ENCODE measurements at regions of chr15 and their contacts with region 1.

Region 1: GRCh38 chr15:55649054-55649423 is 60.9 kb upstream of the PYGO1 start:
- DNase-seq: no peak
- H3K4me3 ChIP-seq: no peak overlapping the region
- H3K27ac ChIP-seq: no peak overlapping the region
- H3K4me1 ChIP-seq: no peaks in the 10 kb centered on the region
- H3K27me3 ChIP-seq: no peaks in the 10 kb centered on the region
- CTCF ChIP-seq: no peak
- EP300 ChIP-seq: no peak
- POLR2A ChIP-seq: no peak

Region 2: DNA sequence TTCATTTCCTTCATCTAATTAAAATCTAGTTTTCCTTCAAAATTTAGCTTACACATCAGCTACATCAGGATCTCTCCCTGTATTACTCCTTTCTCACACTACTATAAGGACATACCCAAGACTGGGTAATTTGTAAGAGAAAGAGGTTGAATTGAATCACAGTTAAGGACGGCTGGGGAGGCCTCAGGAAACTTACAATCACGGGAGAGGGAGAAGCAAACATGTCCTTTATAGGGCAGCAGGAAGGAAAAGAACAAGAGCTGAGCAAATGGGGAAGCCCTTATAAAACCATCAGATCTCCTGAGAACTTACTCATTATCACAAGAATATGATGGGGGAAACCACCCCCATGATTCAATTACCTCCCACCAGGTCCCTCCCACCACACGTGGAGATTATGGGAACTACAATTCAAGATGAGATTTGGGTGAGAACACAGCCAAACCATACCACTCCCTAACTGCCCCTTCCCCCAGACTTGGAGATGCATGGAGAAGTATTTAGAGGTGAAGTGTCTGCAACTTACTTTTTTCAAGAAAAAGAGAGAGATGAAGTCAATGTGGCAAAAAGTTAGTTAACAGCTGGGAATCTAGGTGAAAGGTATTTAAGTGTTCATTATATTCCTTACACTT is 72.6 kb after region 1 on chr15:
- intact Hi-C with region 1: no loop called
- DNase-seq: no peak
- H3K4me3 ChIP-seq: no peak overlapping the region
- H3K27ac ChIP-seq: no peak overlapping the region
- H3K4me1 ChIP-seq: no peaks in the 10 kb centered on the region
- H3K27me3 ChIP-seq: no peaks in the 10 kb centered on the region
- CTCF ChIP-seq: no peak
- EP300 ChIP-seq: no peak
- POLR2A ChIP-seq: no peak

Region 3: DNA sequence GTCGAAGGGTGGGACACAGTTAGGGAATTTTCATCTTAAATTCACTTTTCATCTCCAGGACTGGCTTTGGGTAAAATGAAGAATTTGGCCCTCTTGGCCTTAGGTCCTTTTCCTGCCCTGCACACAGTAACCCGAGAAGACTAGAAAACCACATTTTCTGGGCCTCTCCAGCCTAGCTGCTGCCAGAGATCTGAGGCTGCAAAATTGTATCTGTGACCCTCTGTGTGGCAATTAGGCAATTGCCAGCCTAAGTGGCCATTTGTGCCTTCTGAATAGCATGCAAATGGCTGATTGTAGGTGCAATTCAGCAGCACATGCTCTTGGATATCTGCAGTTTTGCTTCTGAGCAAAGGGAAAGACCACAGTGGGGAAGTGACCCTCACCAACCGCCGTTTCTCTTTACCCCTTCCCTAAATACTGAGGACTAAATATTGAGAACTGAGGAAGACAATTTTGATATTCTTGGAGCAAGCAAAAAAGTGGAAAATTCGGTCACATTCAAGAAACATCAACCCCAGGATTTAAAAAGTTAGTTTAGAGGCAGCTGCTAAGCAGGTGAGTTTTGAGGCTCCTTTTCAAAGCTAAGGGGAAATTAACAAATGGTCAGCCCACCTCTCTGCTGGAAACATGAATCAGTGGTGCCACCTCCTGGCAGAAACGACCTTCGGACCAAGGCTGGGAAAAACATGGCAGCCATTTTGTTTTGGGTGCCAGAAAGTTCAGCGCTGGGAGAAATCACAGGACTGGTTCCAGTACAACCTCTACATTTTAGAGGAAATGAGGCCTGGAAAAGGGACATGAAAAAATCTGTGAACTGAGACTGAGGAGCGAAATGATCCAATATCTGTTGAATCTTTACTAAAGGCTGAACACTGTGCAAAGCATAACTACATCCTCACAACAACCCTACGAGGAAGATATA is 150.5 kb after region 1 on chr15:
- intact Hi-C with region 1: loop called (anchors 5 kb)
- DNase-seq: no peak
- H3K4me3 ChIP-seq: no peak overlapping the region
- H3K27ac ChIP-seq: no peak overlapping the region
- H3K4me1 ChIP-seq: peaks cover 0 to 11% (median 9%) of the 10 kb centered on the region in 4 donors
- H3K27me3 ChIP-seq: peaks cover 0 to 4% (median 0%) of the 10 kb centered on the region in 4 donors
- CTCF ChIP-seq: peak in 1 of 3 experiments; percentile 25
- EP300 ChIP-seq: no peak
- POLR2A ChIP-seq: no peak

Region 4: DNA sequence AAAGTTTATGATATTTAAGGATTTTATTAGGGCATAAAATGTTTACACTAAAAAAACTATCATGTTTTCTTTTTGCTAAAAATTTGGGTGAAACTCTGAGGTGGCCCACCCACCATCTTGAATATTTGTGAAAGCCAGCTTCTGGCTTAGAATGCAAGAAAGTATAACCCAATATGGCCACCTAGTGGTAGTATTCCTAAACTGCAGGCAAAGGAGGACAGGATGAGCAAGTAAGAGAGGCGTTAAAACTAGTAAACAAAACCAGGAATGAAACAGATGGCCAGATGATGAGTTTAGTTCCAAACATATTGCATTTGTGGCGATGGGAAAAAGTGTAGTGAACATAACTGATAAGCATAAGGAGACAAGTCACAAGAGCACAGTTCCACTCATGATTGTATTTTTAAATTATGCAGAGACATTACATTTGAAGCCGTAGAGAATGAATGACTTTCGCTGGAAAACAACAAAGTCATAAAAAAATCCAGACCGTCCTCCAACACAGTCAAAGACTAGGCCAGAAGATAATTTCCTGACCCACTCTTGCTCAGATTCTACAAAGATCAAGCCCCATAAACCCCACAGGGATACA is 197.2 kb after region 1 on chr15:
- intact Hi-C with region 1: loop called (anchors 2 kb)
- DNase-seq: no peak
- H3K4me3 ChIP-seq: no peak overlapping the region
- H3K27ac ChIP-seq: no peak overlapping the region
- H3K4me1 ChIP-seq: no peaks in the 10 kb centered on the region
- H3K27me3 ChIP-seq: no peaks in the 10 kb centered on the region
- CTCF ChIP-seq: peak; percentile 73 to 91 (median 88)
- EP300 ChIP-seq: no peak
- POLR2A ChIP-seq: no peak

Region 5: GRCh38 chr15:55897560-55898336 is 248.7 kb after region 1 on chr15:
- intact Hi-C with region 1: loop called (anchors 10 kb)
- DNase-seq: no peak
- H3K4me3 ChIP-seq: no peak overlapping the region
- H3K27ac ChIP-seq: peak overlapping the region in 3 of 4 donors; percentile 14 to 62 (median 50)
- H3K4me1 ChIP-seq: peaks cover 0 to 23% (median 14%) of the 10 kb centered on the region in 4 donors
- H3K27me3 ChIP-seq: no peaks in the 10 kb centered on the region
- CTCF ChIP-seq: peak; percentile 65 to 79 (median 68)
- EP300 ChIP-seq: no peak
- POLR2A ChIP-seq: no peak

Region 6: DNA sequence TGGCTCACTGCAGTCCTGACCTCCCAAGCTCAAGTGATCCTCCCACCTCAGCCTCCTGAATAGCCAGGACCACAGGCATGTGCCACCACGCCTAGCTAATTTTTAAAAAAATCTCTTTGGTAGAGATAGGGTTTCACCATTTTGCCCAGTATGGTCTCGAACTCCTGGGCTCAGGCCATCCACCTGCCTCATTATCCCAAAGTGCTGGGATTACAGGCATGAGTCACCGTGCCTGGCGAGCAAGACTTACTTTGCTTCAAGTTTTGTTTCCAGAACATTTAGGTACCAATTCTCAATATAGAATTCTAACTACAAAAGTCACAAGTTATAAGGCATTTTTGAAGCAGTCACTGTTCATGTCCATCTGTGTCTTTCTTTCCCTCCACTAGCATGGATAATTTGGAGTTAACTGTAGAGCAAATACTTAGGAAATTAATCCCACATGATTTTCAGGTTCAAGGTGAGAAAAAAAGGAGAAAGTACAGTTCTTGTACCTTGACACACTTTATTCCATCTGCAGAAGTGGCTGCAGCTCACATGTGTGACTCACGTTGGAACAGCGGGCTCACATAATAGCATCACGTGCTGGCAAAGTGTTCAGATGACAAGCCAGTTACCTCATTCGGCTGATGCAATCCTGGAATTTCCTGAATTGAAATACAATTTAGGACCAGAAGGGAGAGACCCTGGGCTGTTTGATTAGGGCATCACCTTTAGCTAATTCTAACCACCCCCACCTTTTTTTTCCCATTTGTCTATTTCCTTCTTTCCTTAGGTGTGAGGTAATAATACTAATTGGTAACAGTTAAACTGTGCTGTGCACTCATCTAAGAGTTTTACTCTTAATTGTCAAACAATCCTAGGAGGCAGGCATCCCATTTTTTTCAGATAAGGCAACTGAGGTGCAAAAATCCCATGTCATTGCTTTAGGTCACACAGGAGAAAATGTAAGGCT is 391.3 kb after region 1 on chr15:
- intact Hi-C with region 1: no loop called
- DNase-seq: no peak
- H3K4me3 ChIP-seq: no peak overlapping the region
- H3K27ac ChIP-seq: peak overlapping the region; percentile 44 to 60 (median 52)
- H3K4me1 ChIP-seq: peaks cover 10 to 12% (median 12%) of the 10 kb centered on the region in 4 donors
- H3K27me3 ChIP-seq: no peaks in the 10 kb centered on the region
- CTCF ChIP-seq: no peak
- EP300 ChIP-seq: no peak
- POLR2A ChIP-seq: no peak

Region 7: DNA sequence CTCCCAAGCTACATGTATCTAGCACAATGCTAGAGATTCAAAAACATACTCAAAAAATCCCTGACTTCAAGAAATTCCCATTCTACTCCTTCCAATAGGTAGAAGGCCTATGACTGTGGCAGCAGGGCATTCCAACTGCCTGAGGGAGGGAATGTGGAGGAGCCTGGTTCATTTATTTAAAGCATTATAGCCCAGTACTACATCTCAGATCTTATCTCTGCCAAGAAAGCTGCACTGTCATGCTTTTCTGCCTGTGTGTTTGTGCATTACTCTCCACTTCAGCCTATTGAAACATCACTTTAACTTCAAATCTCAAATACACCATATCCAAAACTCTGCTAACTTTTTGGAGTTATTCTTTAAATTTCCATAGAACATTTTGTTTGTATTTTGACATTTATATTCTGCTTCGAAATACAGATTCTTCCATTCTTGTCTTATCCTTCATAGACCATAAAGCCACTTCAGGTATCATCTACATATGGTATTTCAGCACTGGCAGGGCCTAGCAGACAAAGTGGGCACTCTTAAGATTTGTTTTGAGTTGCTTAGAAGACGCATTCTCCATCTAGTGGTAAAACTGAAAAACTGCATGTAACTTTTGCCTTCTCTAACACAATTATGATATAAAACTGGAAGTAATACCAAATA is 403.5 kb after region 1 on chr15:
- intact Hi-C with region 1: loop called (anchors 5 kb)
- DNase-seq: no peak
- H3K4me3 ChIP-seq: no peak overlapping the region
- H3K27ac ChIP-seq: no peak overlapping the region
- H3K4me1 ChIP-seq: peaks cover 0 to 5% (median 2%) of the 10 kb centered on the region in 4 donors
- H3K27me3 ChIP-seq: no peaks in the 10 kb centered on the region
- CTCF ChIP-seq: peak; percentile 76 to 85 (median 81)
- EP300 ChIP-seq: no peak
- POLR2A ChIP-seq: no peak